Activated CD8-positive, alpha-beta T cell treated with anti-CD3 and anti-CD28 coated beads for 36 hours (primary cell): ENCODE measurements at regions of chr14 and their contacts with region 1.

Region 1: DNA sequence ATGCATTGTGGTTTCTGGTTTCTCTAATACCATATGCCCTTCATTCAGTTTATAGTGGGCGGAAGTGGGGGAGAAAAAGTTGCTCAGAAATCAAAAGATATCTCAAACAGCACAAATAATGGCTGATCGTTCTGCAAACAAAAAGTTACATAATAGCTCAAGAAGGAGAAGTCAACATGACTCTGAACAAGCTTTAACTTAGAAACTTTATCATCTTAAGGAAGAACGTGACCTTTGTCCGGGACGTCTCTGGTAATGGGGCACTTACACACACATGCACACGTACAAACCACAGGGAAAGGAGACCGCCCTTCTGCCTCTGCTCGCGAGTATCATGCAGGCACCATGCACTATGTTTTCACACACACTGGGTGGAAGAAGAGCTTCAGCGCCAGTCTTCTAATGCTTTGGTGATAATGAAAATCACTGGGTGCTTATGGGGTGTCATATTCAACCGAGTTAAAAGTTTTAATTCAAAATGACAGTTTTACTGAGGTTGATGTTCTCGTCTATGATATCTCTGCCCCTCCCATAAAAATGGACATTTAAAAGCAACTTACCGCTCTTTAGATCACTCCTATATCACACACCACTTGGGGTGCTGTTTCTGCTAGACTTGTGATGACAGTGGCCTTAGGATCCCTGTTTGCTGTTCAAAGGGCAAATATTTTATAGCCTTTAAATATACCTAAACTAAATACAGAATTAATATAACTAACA is 4.7 kb downstream of the FOS start:
- DNase-seq: no peak
- ATAC-seq: no peak
- H3K4me3 Mint-ChIP-seq: no peak overlapping the region
- H3K27ac Mint-ChIP-seq: no peak overlapping the region
- H3K4me1 Mint-ChIP-seq: peaks cover 18% of the 10 kb centered on the region
- H3K27me3 Mint-ChIP-seq: peaks cover 14% of the 10 kb centered on the region
- CTCF ChIP-seq: no peak

Region 2: GRCh38 chr14:75132382-75133086 is 150.8 kb before region 1 on chr14:
- CTCF ChIA-PET with region 1: interaction called, 11 read pairs
- POLR2A ChIA-PET with region 1: no interaction called
- intact Hi-C with region 1: no loop called
- DNase-seq: peak; percentile 57
- ATAC-seq: peak; percentile 85
- H3K4me3 Mint-ChIP-seq: no peak overlapping the region
- H3K27ac Mint-ChIP-seq: peak overlapping the region; percentile 32
- H3K4me1 Mint-ChIP-seq: peaks cover 19% of the 10 kb centered on the region
- H3K27me3 Mint-ChIP-seq: no peaks in the 10 kb centered on the region
- CTCF ChIP-seq: peak; percentile 72

Region 3: GRCh38 chr14:75223664-75224154 is 59.6 kb before region 1 on chr14:
- CTCF ChIA-PET with region 1: no interaction called
- POLR2A ChIA-PET with region 1: no interaction called
- intact Hi-C with region 1: no loop called
- DNase-seq: peak; percentile 57
- ATAC-seq: peak; percentile 50
- H3K4me3 Mint-ChIP-seq: no peak overlapping the region
- H3K27ac Mint-ChIP-seq: no peak overlapping the region
- H3K4me1 Mint-ChIP-seq: peaks cover 14% of the 10 kb centered on the region
- H3K27me3 Mint-ChIP-seq: no peaks in the 10 kb centered on the region
- CTCF ChIP-seq: no peak

Region 4: DNA sequence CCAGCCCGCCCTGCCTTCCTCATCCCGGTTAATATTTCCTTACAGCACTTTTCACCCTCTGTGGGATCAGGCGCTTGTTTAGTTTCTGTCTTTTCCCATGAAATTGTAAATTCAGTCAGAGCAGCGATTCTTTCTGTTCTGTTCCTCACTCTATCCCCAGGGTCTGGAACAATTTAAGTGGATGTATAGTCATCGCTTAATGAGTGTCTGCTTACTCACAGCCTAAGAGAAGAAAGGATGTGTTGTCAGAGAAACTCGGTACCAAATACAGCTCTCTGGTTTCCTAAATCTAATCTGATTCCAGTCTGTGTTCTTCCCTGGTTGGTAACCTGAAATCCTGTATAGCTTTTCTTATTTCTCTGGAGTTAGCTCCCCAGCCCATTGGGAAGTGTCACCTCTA is 40.2 kb after region 1 on chr14:
- CTCF ChIA-PET with region 1: no interaction called
- POLR2A ChIA-PET with region 1: no interaction called
- intact Hi-C with region 1: no loop called
- DNase-seq: no peak
- ATAC-seq: no peak
- H3K4me3 Mint-ChIP-seq: no peak overlapping the region
- H3K27ac Mint-ChIP-seq: no peak overlapping the region
- H3K4me1 Mint-ChIP-seq: no peaks in the 10 kb centered on the region
- H3K27me3 Mint-ChIP-seq: peaks cover 3% of the 10 kb centered on the region
- CTCF ChIP-seq: no peak